Astrocyte of the cerebellum (primary cell): ENCODE measurements at regions of chr6 and their contacts with region 1.

Region 1: DNA sequence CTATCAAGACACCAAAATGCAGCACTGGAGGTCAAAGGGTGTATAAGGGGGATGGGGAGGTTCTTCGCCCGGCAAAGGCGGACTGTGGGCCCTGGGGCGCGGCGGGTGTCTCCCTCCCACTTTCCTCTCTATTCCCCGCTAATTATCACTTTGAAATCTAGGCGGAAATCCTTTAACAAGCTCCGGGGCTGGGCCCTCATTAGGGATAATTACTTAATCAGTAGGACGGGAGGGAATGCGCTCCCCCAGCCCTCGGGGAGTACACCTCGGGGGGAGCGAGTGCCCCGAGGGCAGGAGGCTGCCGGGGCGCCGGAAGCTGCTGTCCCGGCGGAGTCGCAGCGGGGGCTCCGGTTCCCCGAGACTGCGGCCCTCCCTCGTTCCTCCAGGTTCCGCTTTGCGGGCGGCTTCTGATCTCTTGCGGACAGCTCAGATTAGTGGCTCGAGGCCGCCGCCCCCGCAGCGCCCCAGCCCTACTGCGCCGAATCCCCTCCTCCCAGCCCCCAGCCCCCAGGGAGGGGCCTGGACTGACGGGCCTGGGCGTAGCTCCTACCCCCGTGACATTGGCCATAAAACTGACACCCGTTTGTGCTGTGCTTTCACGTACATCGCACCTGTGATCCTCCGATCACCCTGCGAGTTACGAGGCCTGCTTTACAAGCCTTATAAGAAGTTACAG is 14.7 kb downstream of the MUCL3 start:
- DNase-seq: no peak
- H3K4me3 ChIP-seq: peak overlapping the region; percentile 31
- CTCF ChIP-seq: no peak

Region 2: DNA sequence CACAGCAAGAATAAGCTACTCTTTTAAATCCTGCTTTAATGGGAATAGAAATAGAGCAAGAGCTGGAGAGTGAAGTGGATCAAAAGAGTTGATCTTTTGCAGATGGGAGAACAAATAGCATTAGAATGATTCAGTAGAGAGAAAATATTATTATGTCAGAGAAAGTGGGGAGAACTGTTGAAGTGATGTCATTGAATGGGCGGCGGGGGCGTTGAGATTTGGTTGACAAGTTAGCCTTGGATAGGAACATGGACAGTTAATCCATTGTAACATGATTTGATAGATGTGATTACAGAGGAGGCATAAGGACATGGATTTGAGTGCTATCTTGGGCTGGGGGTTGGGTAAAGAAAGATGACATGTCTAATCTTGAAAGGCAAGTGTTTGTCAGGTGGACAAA is 319.7 kb before region 1 on chr6:
- in situ Hi-C with region 1: no loop called
- DNase-seq: no peak
- H3K4me3 ChIP-seq: no peak overlapping the region
- CTCF ChIP-seq: no peak

Region 3: GRCh38 chr6:30862156-30862875 is 93.2 kb before region 1 on chr6:
- in situ Hi-C with region 1: loop called (anchors 5 kb)
- DNase-seq: no peak
- H3K4me3 ChIP-seq: no peak overlapping the region
- CTCF ChIP-seq: no peak

Region 4: DNA sequence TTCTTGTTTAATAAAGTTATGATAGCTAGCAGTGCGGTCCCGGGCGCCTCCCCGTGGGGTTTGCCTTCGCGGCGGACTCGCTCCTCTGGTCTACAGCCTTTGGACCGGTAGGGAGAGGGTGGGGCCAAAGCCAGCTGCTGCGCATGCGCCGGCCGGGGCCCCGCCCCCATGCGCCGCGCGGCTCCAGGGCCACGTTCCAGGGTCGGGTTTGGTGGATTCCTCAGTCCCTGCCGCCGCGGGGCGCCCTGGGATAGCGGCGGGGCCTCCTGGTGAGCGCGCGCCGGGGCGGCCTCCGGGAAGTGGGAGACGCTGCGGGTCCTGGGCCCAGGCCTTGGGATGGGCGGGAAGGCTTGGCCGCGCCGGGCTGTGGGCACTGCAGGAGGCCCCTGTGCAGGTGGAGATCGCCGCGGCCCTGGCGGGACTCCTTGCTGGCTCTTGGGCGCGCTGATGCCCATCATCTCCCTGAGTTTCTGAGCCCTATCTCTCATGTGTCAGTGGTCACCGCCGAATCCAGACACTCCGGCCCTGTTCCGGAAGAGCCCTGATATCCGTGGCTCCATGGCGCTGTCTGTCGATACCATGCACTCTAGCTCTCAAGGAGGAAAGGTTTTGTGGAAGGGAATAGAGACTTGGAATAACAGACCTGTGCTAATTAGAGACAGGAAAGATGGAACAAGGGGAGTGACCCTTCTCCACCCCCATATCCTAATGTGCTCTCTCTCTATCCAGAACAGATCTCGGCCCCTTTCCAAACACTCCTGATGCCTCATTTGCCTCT is 41.2 kb before region 1 on chr6 and contains the start of gene VARS2:
- in situ Hi-C with region 1: no loop called
- DNase-seq: peak; percentile 36
- H3K4me3 ChIP-seq: peak within 1 kb of the TSS; percentile 55
- CTCF ChIP-seq: peak; percentile 38

Region 5: GRCh38 chr6:31042806-31043205 is 87.3 kb after region 1 on chr6:
- in situ Hi-C with region 1: no loop called
- DNase-seq: no peak
- H3K4me3 ChIP-seq: no peak overlapping the region
- CTCF ChIP-seq: peak; percentile 60